K562 (cell line): ENCODE measurements at regions of chr1 and their contacts with region 1.

Region 1: GRCh38 chr1:53196485-53197270 is at the start of gene CPT2:
- DNase-seq: peak; percentile 98 to 100 (median 100)
- ATAC-seq: peak; percentile 99
- H3K4me3 ChIP-seq: peak within 1 kb of the TSS; percentile 94
- H3K27ac ChIP-seq: peak within 1 kb of the TSS; percentile 90
- H3K4me1 ChIP-seq: peaks cover 16 to 21% of the 10 kb centered on the region in 2 experiments
- H3K27me3 ChIP-seq: no peaks in the 10 kb centered on the region
- CTCF ChIP-seq: peak in 1 of 3 experiments; percentile 22; a peak in 2 of 6 replicates
- EP300 ChIP-seq: peak; percentile 14; the same call in 1 of the 2 replicates
- POLR2A ChIP-seq: peak; percentile 95
- RAD21 ChIP-seq: peak in 1 of 2 experiments; percentile 4; a peak in 1 of 4 replicates
- polyA plus RNA-seq, gene CPT2: 7.6 to 7.9 TPM

Region 2: DNA sequence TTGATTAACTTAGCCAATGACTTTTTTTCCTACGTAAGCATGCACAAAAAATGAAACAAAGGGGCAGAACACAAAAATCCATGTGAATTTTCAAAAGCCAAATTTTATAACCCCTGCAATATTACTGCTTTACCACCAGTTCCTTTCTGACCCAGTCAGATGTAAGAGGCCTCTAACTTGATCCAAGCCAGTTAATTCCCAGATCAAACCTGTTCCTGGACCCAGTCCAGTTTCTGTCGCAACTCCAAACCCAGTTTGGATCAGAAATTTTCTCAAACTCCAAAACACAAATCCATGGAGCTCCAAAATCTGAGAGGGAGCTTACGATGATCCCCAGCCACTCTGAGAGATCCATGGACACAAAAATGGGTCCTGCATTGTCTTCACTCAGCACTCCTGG is 361.9 kb before region 1 on chr1:
- CTCF ChIA-PET with region 1: no interaction called
- POLR2A ChIA-PET with region 1: no interaction called
- in situ Hi-C with region 1: no loop called
- intact Hi-C with region 1: no loop called
- DNase-seq: no peak
- ATAC-seq: no peak
- H3K4me3 ChIP-seq: no peak overlapping the region
- H3K27ac ChIP-seq: peak overlapping the region; percentile 60; the same call in 1 of the 3 replicates
- H3K4me1 ChIP-seq: peaks cover 10 to 21% of the 10 kb centered on the region in 2 experiments
- H3K27me3 ChIP-seq: no peaks in the 10 kb centered on the region
- CTCF ChIP-seq: no peak
- EP300 ChIP-seq: no peak
- POLR2A ChIP-seq: no peak
- RAD21 ChIP-seq: no peak

Region 3: GRCh38 chr1:53076721-53077598 is 119.7 kb before region 1 on chr1:
- CTCF ChIA-PET with region 1: no interaction called
- POLR2A ChIA-PET with region 1: no interaction called
- in situ Hi-C with region 1: no loop called
- intact Hi-C with region 1: no loop called
- DNase-seq: no peak
- ATAC-seq: no peak
- H3K4me3 ChIP-seq: no peak overlapping the region
- H3K27ac ChIP-seq: no peak overlapping the region
- H3K4me1 ChIP-seq: peaks cover 0 to 33% of the 10 kb centered on the region in 2 experiments; a peak in 2 of 5 replicates
- H3K27me3 ChIP-seq: peaks cover 0 to 28% of the 10 kb centered on the region in 2 experiments; a peak in 2 of 5 replicates
- CTCF ChIP-seq: no peak
- EP300 ChIP-seq: no peak
- POLR2A ChIP-seq: no peak
- RAD21 ChIP-seq: no peak

Region 4: GRCh38 chr1:53214376-53214940 is 17.8 kb after region 1 on chr1:
- CTCF ChIA-PET with region 1: no interaction called
- POLR2A ChIA-PET with region 1: interaction called, 14 read pairs
- in situ Hi-C with region 1: no loop called
- intact Hi-C with region 1: no loop called
- DNase-seq: no peak
- ATAC-seq: no peak; the same call in 2 of the 3 replicates
- H3K4me3 ChIP-seq: no peak overlapping the region
- H3K27ac ChIP-seq: no peak overlapping the region
- H3K4me1 ChIP-seq: peaks cover 0 to 1% of the 10 kb centered on the region in 2 experiments; a peak in 2 of 5 replicates
- H3K27me3 ChIP-seq: no peaks in the 10 kb centered on the region
- CTCF ChIP-seq: no peak
- EP300 ChIP-seq: no peak
- POLR2A ChIP-seq: no peak
- RAD21 ChIP-seq: no peak